CD8-positive, alpha-beta T cell (primary cell): ENCODE measurements at regions of chr17 and their contacts with region 1.

Region 1: GRCh38 chr17:13594762-13595598 is 6.7 kb downstream of the HS3ST3A1 start:
- DNase-seq: peak; percentile 59 to 91 (median 82)
- ATAC-seq: peak; percentile 56
- H3K4me3 ChIP-seq: no peak overlapping the region
- H3K4me3 Mint-ChIP-seq: no peak overlapping the region
- H3K27ac ChIP-seq: no peak overlapping the region
- H3K27ac Mint-ChIP-seq: no peak overlapping the region
- H3K4me1 ChIP-seq: no peaks in the 10 kb centered on the region
- H3K4me1 Mint-ChIP-seq: peaks cover 6% of the 10 kb centered on the region
- H3K27me3 ChIP-seq: peaks cover 0 to 4% of the 10 kb centered on the region in 2 experiments
- H3K27me3 Mint-ChIP-seq: peaks cover 24% of the 10 kb centered on the region
- CTCF ChIP-seq: peak; percentile 92

Region 2: DNA sequence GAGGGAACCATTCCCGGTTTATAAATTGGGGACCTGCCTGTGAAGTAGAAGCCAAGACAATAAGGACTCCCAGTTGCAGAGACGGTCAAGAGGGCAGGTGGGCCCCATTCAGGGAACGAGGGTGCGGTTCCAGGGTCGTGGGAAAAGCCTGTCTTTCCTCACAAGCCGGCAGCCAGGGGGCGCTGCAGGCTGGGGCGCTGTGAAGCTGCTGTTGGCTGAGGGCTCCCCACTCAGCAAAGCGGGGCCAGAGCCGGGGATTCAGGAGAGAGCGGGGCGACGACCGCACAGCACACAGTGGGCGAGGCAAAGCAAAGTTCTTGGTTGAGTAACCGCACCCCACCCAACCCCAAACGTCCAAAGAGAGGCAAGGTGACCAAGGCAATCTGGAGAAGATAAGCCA is 616.8 kb after region 1 on chr17:
- CTCF ChIA-PET with region 1: interaction called, 4 read pairs
- POLR2A ChIA-PET with region 1: no interaction called
- intact Hi-C with region 1: loop called in 1 of 2 experiments (anchors 5 kb)
- DNase-seq: peak in 8 of 9 experiments; percentile 40 to 73 (median 60)
- ATAC-seq: peak; percentile 69
- H3K4me3 ChIP-seq: no peak overlapping the region
- H3K4me3 Mint-ChIP-seq: no peak overlapping the region
- H3K27ac ChIP-seq: no peak overlapping the region
- H3K27ac Mint-ChIP-seq: no peak overlapping the region
- H3K4me1 ChIP-seq: peaks cover 9% of the 10 kb centered on the region
- H3K4me1 Mint-ChIP-seq: peaks cover 27% of the 10 kb centered on the region
- H3K27me3 ChIP-seq: no peaks in the 10 kb centered on the region
- H3K27me3 Mint-ChIP-seq: no peaks in the 10 kb centered on the region
- CTCF ChIP-seq: peak; percentile 48

Region 3: DNA sequence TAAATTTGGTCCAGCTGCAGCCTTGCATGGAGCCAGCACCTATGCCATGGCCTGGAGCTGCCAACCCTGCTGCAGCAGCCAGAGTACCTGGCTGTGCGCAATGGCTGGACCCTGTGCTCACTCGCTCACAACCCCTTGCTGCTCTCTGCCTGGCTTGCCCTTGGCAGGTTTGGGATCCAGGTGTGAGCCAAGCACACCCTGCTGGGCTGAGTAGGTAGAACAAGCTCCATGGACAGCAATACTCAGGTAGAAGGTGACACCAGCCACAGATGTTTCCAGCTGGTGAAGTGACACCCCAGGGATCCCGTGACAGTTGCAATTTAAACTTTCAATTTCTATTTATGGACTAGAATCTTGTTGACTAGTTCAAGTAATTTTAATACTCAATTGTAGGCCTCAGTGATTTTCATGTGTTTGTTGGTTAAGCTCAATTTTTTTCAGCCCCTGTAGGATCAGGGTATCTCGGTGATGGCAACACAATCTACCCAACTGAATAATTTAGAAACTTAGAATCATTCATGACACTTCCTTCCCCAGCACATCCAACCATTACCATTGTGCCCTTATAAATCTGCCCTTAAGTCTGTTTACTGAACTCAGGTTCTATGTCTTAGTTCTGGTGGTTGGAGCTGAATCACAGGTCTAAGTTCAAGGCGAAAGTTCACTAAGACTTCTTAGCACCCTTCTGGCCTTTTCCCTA is 1190.2 kb after region 1 on chr17:
- CTCF ChIA-PET with region 1: interaction called, 51 read pairs
- POLR2A ChIA-PET with region 1: no interaction called
- intact Hi-C with region 1: loop called in 1 of 2 experiments (anchors 1 kb)
- DNase-seq: peak; percentile 3 to 60 (median 33)
- ATAC-seq: peak; percentile 62
- H3K4me3 ChIP-seq: no peak overlapping the region
- H3K4me3 Mint-ChIP-seq: no peak overlapping the region
- H3K27ac ChIP-seq: no peak overlapping the region
- H3K27ac Mint-ChIP-seq: no peak overlapping the region
- H3K4me1 ChIP-seq: no peaks in the 10 kb centered on the region
- H3K4me1 Mint-ChIP-seq: no peaks in the 10 kb centered on the region
- H3K27me3 ChIP-seq: no peaks in the 10 kb centered on the region
- H3K27me3 Mint-ChIP-seq: peaks cover 2% of the 10 kb centered on the region
- CTCF ChIP-seq: peak; percentile 16

Region 4: DNA sequence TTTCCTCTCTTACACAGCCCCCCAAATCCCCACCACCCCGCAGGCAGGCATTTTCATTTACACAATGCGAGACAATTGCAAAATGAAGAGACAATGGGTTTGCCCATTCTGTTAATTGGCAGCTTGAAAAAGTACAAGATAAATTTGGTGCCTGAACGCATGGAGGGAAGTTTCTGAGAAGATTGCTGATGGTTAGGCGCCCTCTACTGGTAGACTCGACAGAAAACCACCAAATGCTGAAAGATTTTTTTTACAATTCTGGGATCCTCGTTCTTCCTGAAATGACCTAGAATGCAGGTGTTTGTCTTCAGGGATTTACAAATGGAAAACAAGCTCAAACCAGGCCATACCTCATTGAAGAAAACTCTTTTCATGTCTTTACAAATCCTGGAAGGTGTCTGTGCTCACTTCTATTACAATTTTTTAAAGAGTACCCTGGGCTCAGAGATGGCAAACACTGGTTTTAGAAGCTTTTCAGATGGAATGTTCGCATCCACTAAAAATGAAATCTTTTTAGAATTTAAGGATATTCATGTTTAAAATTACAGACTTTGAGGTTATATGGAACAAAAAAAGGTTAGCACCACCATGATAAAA is 1331.6 kb after region 1 on chr17:
- CTCF ChIA-PET with region 1: interaction called, 105 read pairs
- POLR2A ChIA-PET with region 1: no interaction called
- intact Hi-C with region 1: loop called (anchors 1 kb)
- DNase-seq: peak; percentile 13 to 75 (median 56)
- ATAC-seq: no peak
- H3K4me3 ChIP-seq: no peak overlapping the region
- H3K4me3 Mint-ChIP-seq: no peak overlapping the region
- H3K27ac ChIP-seq: no peak overlapping the region
- H3K27ac Mint-ChIP-seq: no peak overlapping the region
- H3K4me1 ChIP-seq: no peaks in the 10 kb centered on the region
- H3K4me1 Mint-ChIP-seq: no peaks in the 10 kb centered on the region
- H3K27me3 ChIP-seq: peaks cover 0 to 3% of the 10 kb centered on the region in 2 experiments
- H3K27me3 Mint-ChIP-seq: peaks cover 14% of the 10 kb centered on the region
- CTCF ChIP-seq: peak; percentile 91